ENCODE measurements at regions of chr9 and their contacts with region 1.

Region 1: GRCh38 chr9:127715394-127716337 is at the starts of genes PTRH1 and TTC16:
- DNase-seq: peak; percentile 99
- ATAC-seq: peak; percentile 97
- H3K4me3 Mint-ChIP-seq: peak within 1 kb of the TSS; percentile 92
- H3K27ac Mint-ChIP-seq: peak within 1 kb of the TSS; percentile 97
- H3K4me1 Mint-ChIP-seq: peaks cover 25% of the 10 kb centered on the region
- H3K27me3 Mint-ChIP-seq: no peaks in the 10 kb centered on the region
- total RNA-seq, gene PTRH1: 12.9 to 15.1 TPM
- total RNA-seq, gene TTC16: 0.16 to 0.30 TPM

Region 2: GRCh38 chr9:127503947-127504782 is 211.5 kb before region 1 on chr9:
- CTCF ChIA-PET with region 1: no interaction called
- POLR2A ChIA-PET with region 1: no interaction called
- intact Hi-C with region 1: loop called (anchors 5 kb)
- DNase-seq: peak; percentile 89
- ATAC-seq: peak; percentile 90
- H3K4me3 Mint-ChIP-seq: no peak overlapping the region
- H3K27ac Mint-ChIP-seq: no peak overlapping the region
- H3K4me1 Mint-ChIP-seq: no peaks in the 10 kb centered on the region
- H3K27me3 Mint-ChIP-seq: no peaks in the 10 kb centered on the region

Region 3: GRCh38 chr9:127568971-127569885 is 146.4 kb before region 1 on chr9:
- CTCF ChIA-PET with region 1: no interaction called
- POLR2A ChIA-PET with region 1: interaction called, 3 read pairs
- intact Hi-C with region 1: loop called in 1 of 2 experiments (anchors 1 kb)
- DNase-seq: peak; percentile 88
- ATAC-seq: peak; percentile 85
- H3K4me3 Mint-ChIP-seq: peak overlapping the region; percentile 71
- H3K27ac Mint-ChIP-seq: peak overlapping the region; percentile 38
- H3K4me1 Mint-ChIP-seq: peaks cover 26% of the 10 kb centered on the region
- H3K27me3 Mint-ChIP-seq: no peaks in the 10 kb centered on the region

Region 4: DNA sequence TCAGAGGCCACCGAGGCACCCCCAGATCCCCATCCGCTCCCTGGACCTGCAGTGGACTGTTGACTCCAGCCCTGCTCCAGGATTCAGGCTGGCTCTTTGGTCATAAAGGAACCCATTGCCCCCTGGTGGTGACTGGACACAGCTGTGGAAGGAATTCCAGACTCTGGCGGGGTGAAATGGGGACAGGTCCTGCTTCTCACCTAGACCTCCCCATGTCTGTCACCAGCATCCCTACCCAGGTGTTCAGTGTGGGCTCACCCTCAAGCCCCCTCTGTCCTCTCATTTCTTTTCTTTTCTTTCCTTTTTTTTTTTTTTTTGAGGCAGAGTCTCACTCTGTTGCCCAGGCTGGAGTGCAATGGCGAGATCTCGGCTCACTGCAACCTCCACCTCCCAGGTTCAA is 129.1 kb before region 1 on chr9:
- CTCF ChIA-PET with region 1: no interaction called
- POLR2A ChIA-PET with region 1: no interaction called
- intact Hi-C with region 1: no loop called
- DNase-seq: peak; percentile 75
- ATAC-seq: peak; percentile 74
- H3K4me3 Mint-ChIP-seq: no peak overlapping the region
- H3K27ac Mint-ChIP-seq: no peak overlapping the region
- H3K4me1 Mint-ChIP-seq: peaks cover 4% of the 10 kb centered on the region
- H3K27me3 Mint-ChIP-seq: peaks cover 15% of the 10 kb centered on the region

Region 5: GRCh38 chr9:127698985-127699670 is 16.5 kb before region 1 on chr9:
- CTCF ChIA-PET with region 1: interaction called, 4 read pairs
- POLR2A ChIA-PET with region 1: no interaction called
- intact Hi-C with region 1: loop called in 1 of 2 experiments (anchors 1 kb)
- DNase-seq: peak; percentile 91
- ATAC-seq: peak; percentile 100
- H3K4me3 Mint-ChIP-seq: peak overlapping the region; percentile 67
- H3K27ac Mint-ChIP-seq: peak overlapping the region; percentile 21
- H3K4me1 Mint-ChIP-seq: peaks cover 12% of the 10 kb centered on the region
- H3K27me3 Mint-ChIP-seq: no peaks in the 10 kb centered on the region

Region 6: DNA sequence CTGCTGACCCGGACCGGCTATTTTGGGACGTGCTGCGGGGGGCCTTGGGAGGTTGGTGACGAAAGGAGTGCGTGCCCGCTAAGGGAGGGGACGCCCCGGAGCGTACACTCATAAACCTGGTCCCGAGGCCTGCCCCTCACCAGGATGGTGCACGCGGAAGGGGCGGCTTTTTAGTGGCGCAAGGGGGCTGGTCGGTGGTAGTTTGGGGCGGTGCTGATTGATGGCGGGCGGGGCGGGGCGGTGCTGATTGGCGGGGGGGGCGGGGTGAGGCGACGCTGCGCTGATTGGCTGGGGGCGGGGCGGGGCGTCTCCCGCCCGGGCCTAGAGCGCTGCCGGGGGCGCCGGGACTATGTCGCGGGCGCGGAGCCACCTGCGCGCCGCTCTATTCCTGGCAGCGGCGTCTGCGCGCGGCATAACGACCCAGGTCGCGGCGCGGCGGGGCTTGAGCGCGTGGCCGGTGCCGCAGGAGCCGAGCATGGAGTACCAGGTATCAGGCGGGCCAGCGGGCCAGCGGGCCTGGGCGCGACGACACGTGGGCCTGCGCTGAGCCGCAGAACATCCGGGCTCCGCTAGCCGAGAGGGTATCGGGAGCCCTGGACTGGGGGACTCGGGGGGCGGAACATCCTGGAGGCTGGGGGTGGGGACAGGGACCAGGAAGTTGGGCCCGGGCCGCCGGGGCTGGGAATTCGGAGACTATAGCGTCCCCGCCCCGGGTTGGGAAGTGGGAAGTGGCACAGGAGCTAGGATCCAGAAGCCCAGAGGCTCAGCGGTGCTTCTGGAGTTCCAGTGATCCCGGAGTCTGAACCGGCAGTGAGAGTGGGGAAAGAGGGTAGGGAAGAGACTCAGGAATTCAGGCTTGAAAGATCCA is 87.1 kb after region 1 on chr9 and contains the start of gene FPGS:
- CTCF ChIA-PET with region 1: no interaction called
- POLR2A ChIA-PET with region 1: no interaction called
- intact Hi-C with region 1: loop called in 1 of 2 experiments (anchors 1 kb)
- DNase-seq: peak; percentile 93
- ATAC-seq: peak; percentile 86
- H3K4me3 Mint-ChIP-seq: peak within 1 kb of the TSS; percentile 98
- H3K27ac Mint-ChIP-seq: peak within 1 kb of the TSS; percentile 95
- H3K4me1 Mint-ChIP-seq: peaks cover 26% of the 10 kb centered on the region
- H3K27me3 Mint-ChIP-seq: no peaks in the 10 kb centered on the region
- total RNA-seq, gene FPGS: 71.9 to 80.4 TPM